Activated CD8-positive, alpha-beta T cell treated with anti-CD3 and anti-CD28 coated beads for 36 hours (primary cell): ENCODE measurements at regions of chr10 and their contacts with region 1.

Region 1: DNA sequence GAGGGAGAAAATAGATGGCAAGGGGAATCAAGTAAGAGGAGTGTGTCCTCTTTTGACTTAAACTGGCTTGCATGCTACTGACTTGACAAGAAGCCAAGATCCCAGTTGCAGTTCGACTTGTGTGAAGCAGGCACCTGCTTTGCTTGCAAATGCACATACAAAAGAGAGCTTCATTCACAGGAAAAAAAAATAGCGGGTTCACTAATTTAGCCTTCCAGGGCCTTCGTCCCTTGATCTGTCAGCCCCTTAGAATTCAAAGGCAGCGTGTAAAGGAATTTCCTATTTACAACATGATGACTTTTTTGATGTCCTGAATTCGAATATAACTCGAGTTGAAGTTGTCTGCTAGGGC is 192.1 kb downstream of the CELF2 start:
- DNase-seq: no peak
- ATAC-seq: peak; percentile 4
- H3K4me3 Mint-ChIP-seq: peak overlapping the region; percentile 72
- H3K27ac Mint-ChIP-seq: peak overlapping the region; percentile 97
- H3K4me1 Mint-ChIP-seq: peaks cover 98% of the 10 kb centered on the region
- H3K27me3 Mint-ChIP-seq: no peaks in the 10 kb centered on the region
- CTCF ChIP-seq: no peak

Region 2: GRCh38 chr10:11074536-11075267 is 135.1 kb before region 1 on chr10:
- CTCF ChIA-PET with region 1: no interaction called
- POLR2A ChIA-PET with region 1: no interaction called
- intact Hi-C with region 1: no loop called
- DNase-seq: no peak
- ATAC-seq: no peak
- H3K4me3 Mint-ChIP-seq: no peak overlapping the region
- H3K27ac Mint-ChIP-seq: no peak overlapping the region
- H3K4me1 Mint-ChIP-seq: no peaks in the 10 kb centered on the region
- H3K27me3 Mint-ChIP-seq: peaks cover 3% of the 10 kb centered on the region
- CTCF ChIP-seq: no peak

Region 3: GRCh38 chr10:11145495-11145855 is 64.3 kb before region 1 on chr10:
- CTCF ChIA-PET with region 1: no interaction called
- POLR2A ChIA-PET with region 1: interaction called, 12 read pairs
- intact Hi-C with region 1: no loop called
- DNase-seq: peak; percentile 79
- ATAC-seq: peak; percentile 63
- H3K4me3 Mint-ChIP-seq: peak overlapping the region; percentile 74
- H3K27ac Mint-ChIP-seq: peak overlapping the region; percentile 93
- H3K4me1 Mint-ChIP-seq: peaks cover 86% of the 10 kb centered on the region
- H3K27me3 Mint-ChIP-seq: no peaks in the 10 kb centered on the region
- CTCF ChIP-seq: no peak

Region 4: GRCh38 chr10:11236234-11236633 is 26.4 kb after region 1 on chr10:
- CTCF ChIA-PET with region 1: interaction called, 6 read pairs
- POLR2A ChIA-PET with region 1: interaction called, 53 read pairs
- intact Hi-C with region 1: no loop called
- DNase-seq: peak; percentile 57
- ATAC-seq: peak; percentile 48
- H3K4me3 Mint-ChIP-seq: peak overlapping the region; percentile 20
- H3K27ac Mint-ChIP-seq: peak overlapping the region; percentile 92
- H3K4me1 Mint-ChIP-seq: peaks cover 95% of the 10 kb centered on the region
- H3K27me3 Mint-ChIP-seq: no peaks in the 10 kb centered on the region
- CTCF ChIP-seq: no peak